CD4-positive, alpha-beta T cell (primary cell): ENCODE measurements at regions of chr17 and their contacts with region 1.

Region 1: DNA sequence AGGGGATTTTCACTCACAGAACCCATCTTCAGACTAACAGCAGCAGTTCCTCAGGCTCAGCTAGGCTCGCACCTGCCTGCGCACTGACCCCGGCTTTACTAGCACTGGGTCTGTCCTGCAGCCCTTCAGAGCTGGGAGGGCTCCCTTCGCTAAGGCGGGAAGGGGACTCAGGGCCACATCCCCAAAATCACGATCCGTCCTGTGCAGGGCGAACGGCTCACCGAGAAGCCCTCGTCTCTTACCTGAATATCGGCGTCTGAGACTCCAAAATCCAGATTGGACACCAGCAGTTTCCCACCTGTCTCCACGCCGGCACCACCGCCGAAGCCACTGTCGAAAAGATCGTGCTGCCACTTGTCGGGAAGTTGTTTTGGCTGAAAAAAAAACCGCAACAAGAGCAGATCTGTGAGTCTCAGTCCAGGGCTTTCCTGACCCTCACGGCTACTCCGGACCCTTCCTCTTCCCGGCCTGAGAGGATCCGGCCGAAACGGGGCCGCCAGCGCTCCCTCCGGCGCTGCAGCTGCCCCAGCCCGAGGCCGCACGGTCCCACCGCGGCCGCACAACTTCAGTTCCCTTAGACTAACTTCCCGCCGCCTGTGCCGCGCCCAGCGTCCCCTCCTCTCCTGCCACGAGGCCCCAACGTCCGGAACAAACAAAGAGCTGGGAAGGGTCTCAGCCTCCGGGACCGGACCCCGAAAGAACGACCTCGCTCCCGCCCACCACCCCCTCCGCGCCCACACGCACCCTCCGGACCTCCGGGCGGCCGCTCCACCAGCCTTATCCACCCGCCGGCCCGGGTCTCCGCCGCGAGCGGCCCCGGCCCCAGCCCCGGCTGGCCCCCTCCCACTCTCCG is 713 bp downstream of the ALYREF start:
- DNase-seq: peak in 4 of 14 experiments; percentile 7 to 55 (median 45)
- ATAC-seq: no peak
- H3K4me3 ChIP-seq: peak overlapping the region; percentile 58
- H3K4me3 Mint-ChIP-seq: peak overlapping the region; percentile 94
- H3K27ac ChIP-seq: peak overlapping the region; percentile 35 to 37
- H3K27ac Mint-ChIP-seq: peak overlapping the region; percentile 95
- H3K4me1 ChIP-seq: peaks cover 27% of the 10 kb centered on the region
- H3K4me1 Mint-ChIP-seq: peaks cover 7% of the 10 kb centered on the region
- H3K27me3 ChIP-seq: no peaks in the 10 kb centered on the region
- H3K27me3 Mint-ChIP-seq: no peaks in the 10 kb centered on the region
- CTCF ChIP-seq: no peak

Region 2: GRCh38 chr17:81833160-81833920 is 57.3 kb before region 1 on chr17 and contains the start of gene MCRIP1:
- CTCF ChIA-PET with region 1: no interaction called
- POLR2A ChIA-PET with region 1: no interaction called
- intact Hi-C with region 1: loop called in 1 of 2 experiments (anchors 5 kb)
- DNase-seq: peak; percentile 82 to 98 (median 92)
- ATAC-seq: peak; percentile 78
- H3K4me3 ChIP-seq: peak within 1 kb of the TSS; percentile 80
- H3K4me3 Mint-ChIP-seq: peak within 1 kb of the TSS; percentile 93
- H3K27ac ChIP-seq: peak within 1 kb of the TSS; percentile 72 to 91
- H3K27ac Mint-ChIP-seq: peak within 1 kb of the TSS; percentile 88
- H3K4me1 ChIP-seq: peaks cover 28% of the 10 kb centered on the region
- H3K4me1 Mint-ChIP-seq: peaks cover 19% of the 10 kb centered on the region
- H3K27me3 ChIP-seq: no peaks in the 10 kb centered on the region
- H3K27me3 Mint-ChIP-seq: no peaks in the 10 kb centered on the region
- CTCF ChIP-seq: no peak
- total RNA-seq, gene MCRIP1: 36.9 to 37.7 TPM

Region 3: DNA sequence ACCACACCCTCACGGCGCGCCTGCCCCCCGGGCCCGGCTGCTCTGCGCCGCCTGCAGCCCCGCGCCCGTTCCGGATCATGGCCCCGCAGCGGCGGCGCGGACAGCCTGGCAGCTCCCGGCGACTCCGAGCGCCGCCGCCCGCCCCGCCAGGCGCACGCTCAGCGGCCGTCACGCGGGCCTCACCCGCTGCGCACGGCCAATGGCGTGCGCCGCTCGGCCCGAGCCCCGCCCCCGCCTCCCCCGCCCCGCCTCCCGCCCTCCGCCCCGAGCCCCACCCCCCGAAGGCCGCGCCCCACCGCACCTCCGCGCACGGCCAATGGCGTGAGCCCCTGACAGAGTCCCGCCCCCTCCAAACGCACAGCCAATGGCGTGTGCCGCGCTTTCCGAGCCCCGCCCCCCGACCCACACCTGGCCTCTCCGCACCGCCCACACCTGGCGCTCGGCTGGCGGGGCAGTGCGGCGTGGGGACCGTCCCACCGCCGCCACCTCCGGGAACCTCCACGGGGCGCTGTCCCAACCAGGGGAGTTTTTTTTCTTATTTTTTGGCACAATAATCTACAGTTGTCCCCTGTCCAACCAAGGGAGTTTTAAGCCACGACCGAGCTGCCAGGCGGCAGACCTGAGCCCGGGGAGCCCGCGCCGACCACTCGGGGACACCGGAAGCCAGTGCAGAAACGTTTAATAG is 20.7 kb after region 1 on chr17 and contains the start of gene PCYT2:
- CTCF ChIA-PET with region 1: interaction called, 3 read pairs
- POLR2A ChIA-PET with region 1: interaction called, 4 read pairs
- intact Hi-C with region 1: loop called (anchors 1 to 2 kb)
- DNase-seq: peak; percentile 89 to 97 (median 93)
- ATAC-seq: peak; percentile 97
- H3K4me3 ChIP-seq: peak within 1 kb of the TSS; percentile 72
- H3K4me3 Mint-ChIP-seq: peak within 1 kb of the TSS; percentile 92
- H3K27ac ChIP-seq: peak within 1 kb of the TSS in 1 of 2 donors; percentile 29
- H3K27ac Mint-ChIP-seq: peak within 1 kb of the TSS; percentile 73
- H3K4me1 ChIP-seq: peaks cover 33% of the 10 kb centered on the region
- H3K4me1 Mint-ChIP-seq: peaks cover 11% of the 10 kb centered on the region
- H3K27me3 ChIP-seq: no peaks in the 10 kb centered on the region
- H3K27me3 Mint-ChIP-seq: no peaks in the 10 kb centered on the region
- CTCF ChIP-seq: no peak
- total RNA-seq, gene PCYT2: 18.7 to 18.9 TPM

Region 4: DNA sequence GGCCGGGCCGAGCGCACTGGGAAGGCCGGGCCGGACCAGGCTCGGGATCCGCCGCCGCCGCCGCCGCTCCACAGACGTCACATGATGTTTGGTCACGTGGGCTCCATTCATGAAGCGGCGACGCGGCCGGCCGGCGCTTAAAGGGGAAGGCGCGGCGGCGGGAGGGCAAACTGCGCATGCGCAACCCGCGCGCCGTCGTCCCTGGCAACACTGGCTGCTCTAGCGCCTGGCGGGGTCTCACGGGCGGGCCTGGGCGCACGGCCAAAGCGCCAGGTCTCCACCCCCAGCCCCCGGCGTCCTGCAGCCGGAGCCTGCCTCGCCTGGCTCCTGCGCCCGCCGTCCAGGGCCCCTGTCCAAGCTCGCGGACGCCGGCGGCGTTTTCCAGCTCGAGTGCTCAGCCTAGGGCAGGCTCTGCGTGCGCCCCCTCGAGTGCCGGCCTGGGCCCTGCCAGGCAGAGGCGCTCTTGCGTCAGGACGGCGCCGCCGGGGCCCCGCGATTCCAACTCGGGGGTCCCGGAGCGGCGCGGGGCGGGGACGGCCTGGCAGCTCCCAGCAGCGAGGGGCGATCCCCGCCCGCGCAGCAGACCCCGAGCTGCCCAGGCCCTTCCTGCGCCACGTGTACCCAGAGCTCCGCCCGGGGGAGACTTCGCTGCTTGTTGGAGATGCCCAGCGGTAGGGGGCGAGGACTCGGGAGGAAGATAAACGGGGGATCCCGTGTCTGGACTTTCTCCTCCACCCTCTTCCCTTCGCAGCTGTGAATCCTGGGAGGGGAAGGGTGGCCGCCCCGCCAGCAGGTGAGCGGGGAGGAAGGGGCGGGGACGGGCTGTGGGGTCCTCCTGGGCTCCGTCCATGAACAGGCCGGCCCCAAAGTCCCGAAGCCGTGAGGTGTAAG is 37.2 kb after region 1 on chr17 and contains the start of gene MAFG:
- CTCF ChIA-PET with region 1: no interaction called
- POLR2A ChIA-PET with region 1: no interaction called
- intact Hi-C with region 1: loop called in 1 of 2 experiments (anchors 5 kb)
- DNase-seq: peak; percentile 78 to 97 (median 87)
- ATAC-seq: peak; percentile 58
- H3K4me3 ChIP-seq: peak within 1 kb of the TSS; percentile 61
- H3K4me3 Mint-ChIP-seq: peak within 1 kb of the TSS; percentile 88
- H3K27ac ChIP-seq: peak within 1 kb of the TSS; percentile 54 to 65
- H3K27ac Mint-ChIP-seq: peak within 1 kb of the TSS; percentile 88
- H3K4me1 ChIP-seq: peaks cover 51% of the 10 kb centered on the region
- H3K4me1 Mint-ChIP-seq: peaks cover 20% of the 10 kb centered on the region
- H3K27me3 ChIP-seq: peaks cover 19% of the 10 kb centered on the region in 2 experiments
- H3K27me3 Mint-ChIP-seq: peaks cover 16% of the 10 kb centered on the region
- CTCF ChIP-seq: no peak
- total RNA-seq, gene MAFG: 10.8 to 13.3 TPM

Region 5: GRCh38 chr17:82051776-82052637 is 161.3 kb after region 1 on chr17 and contains the starts of genes GPS1 and RFNG:
- CTCF ChIA-PET with region 1: no interaction called
- POLR2A ChIA-PET with region 1: no interaction called
- intact Hi-C with region 1: loop called in 1 of 2 experiments (anchors 1 kb)
- DNase-seq: peak; percentile 68 to 90 (median 80)
- ATAC-seq: peak; percentile 92
- H3K4me3 ChIP-seq: peak within 1 kb of the TSS; percentile 75
- H3K4me3 Mint-ChIP-seq: peak within 1 kb of the TSS; percentile 86
- H3K27ac ChIP-seq: no peak within 1 kb of the TSS
- H3K27ac Mint-ChIP-seq: peak within 1 kb of the TSS; percentile 71
- H3K4me1 ChIP-seq: peaks cover 41% of the 10 kb centered on the region
- H3K4me1 Mint-ChIP-seq: peaks cover 14% of the 10 kb centered on the region
- H3K27me3 ChIP-seq: no peaks in the 10 kb centered on the region
- H3K27me3 Mint-ChIP-seq: no peaks in the 10 kb centered on the region
- CTCF ChIP-seq: no peak
- total RNA-seq, gene GPS1: 64.6 to 69.3 TPM
- total RNA-seq, gene RFNG: 28.1 to 31.2 TPM